Lower leg skin (tissue), 4 donors: ENCODE measurements at regions of chr9 and their contacts with region 1.

Region 1: DNA sequence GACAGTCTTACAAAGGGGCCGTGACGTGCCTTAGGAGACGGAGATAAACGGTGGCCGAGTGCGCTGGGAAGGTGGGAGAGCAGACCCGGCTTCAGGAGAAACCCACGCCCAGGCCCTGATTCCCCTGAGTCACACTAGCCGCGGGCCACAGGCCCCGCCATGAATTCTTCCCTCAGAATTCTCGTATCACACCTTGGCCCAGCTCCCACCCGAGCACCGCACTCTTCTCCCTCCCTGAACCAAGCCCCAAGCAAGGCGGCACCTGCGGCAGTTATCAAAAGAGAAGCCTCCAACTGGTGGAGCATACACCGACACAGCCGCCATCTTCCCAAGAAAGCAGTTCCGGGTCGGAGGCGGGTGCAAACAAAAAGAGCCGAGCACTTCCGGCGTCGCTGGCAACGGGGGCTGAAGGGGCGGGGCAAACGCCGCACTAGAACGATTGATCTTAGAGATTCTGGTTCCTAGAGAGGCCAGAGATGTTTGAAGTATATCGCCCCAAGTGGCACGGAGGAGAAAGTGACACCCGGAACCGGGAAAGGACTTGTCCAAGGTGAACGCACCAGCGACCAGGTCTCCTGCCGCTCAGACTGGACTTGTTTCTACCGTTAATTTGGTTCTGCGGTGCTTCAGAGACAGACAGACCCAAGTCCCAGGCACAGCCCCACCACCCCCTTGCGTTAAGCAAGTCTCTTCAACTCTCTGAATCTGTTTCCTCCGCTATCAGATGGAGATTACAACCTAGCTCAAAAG is at the start of gene PSMB7:
- DNase-seq: peak; percentile 97 to 99
- H3K4me3 ChIP-seq: peak within 1 kb of the TSS; percentile 51
- CTCF ChIP-seq: peak in 1 of 3 donors; percentile 75
- POLR2A ChIP-seq: no peak
- total RNA-seq, gene PSMB7: 149 to 187 (median 165) TPM

Region 2: DNA sequence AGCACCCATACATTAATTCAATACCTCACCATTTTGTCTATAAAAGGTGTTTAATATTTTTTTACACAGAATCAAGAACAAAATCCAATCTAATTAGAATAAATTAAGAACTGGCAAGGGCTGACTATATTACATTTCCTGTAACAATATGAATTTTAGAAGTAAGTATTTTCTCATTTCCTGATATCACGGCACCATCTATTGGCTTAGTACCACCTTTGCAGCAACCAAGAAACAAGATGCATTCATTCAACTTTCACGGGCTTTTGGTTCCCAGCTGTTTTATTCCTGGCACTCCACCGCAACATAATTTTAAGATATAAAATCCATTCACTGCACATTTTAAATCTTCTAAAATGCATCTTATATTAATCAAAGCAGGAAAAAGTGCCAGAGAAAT is 20.7 kb before region 1 on chr9:
- intact Hi-C with region 1: loop called (anchors 2 kb)
- DNase-seq: no peak
- H3K4me3 ChIP-seq: no peak overlapping the region
- CTCF ChIP-seq: no peak
- POLR2A ChIP-seq: no peak

Region 3: GRCh38 chr9:124544535-124544934 is 129.3 kb after region 1 on chr9:
- intact Hi-C with region 1: loop called (anchors 5 kb)
- DNase-seq: no peak
- H3K4me3 ChIP-seq: no peak overlapping the region
- CTCF ChIP-seq: no peak
- POLR2A ChIP-seq: no peak